CD4-positive, alpha-beta memory T cell (primary cell): ENCODE measurements at regions of chr2 and their contacts with region 1.

Region 1: DNA sequence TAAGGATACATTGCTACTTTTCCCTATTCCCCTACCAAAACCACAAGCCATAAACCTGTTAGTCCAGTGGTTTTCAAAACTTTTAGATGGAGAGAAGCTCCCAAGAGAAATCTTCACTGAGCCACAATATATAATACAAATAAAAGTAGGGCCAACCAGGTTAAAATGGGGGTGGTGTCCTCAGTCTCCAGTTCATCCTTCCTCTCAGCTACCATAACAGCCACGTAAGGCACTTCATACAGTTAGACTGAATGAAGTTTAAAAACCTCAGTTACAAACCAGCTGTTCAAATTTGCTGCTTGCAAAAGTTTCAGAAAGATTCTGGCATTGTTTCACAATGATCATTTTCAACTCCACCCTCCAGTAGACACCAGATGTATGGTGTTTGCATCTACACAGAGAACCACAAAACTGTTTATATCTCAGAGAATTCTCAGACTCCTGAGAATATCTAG is 26.0 kb downstream of the SOS1 start:
- DNase-seq: no peak
- H3K4me3 ChIP-seq: no peak overlapping the region
- H3K4me3 Mint-ChIP-seq: peak overlapping the region in 7 of 8 donors; percentile 2 to 67 (median 9)
- H3K27ac ChIP-seq: no peak overlapping the region
- H3K27ac Mint-ChIP-seq: peak overlapping the region in 6 of 7 donors; percentile 1 to 60 (median 16)
- H3K4me1 ChIP-seq: peaks cover 50% of the 10 kb centered on the region
- H3K4me1 Mint-ChIP-seq: peaks cover 50 to 71% (median 60%) of the 10 kb centered on the region in 4 donors
- H3K27me3 ChIP-seq: no peaks in the 10 kb centered on the region
- H3K27me3 Mint-ChIP-seq: no peaks in the 10 kb centered on the region

Region 2: DNA sequence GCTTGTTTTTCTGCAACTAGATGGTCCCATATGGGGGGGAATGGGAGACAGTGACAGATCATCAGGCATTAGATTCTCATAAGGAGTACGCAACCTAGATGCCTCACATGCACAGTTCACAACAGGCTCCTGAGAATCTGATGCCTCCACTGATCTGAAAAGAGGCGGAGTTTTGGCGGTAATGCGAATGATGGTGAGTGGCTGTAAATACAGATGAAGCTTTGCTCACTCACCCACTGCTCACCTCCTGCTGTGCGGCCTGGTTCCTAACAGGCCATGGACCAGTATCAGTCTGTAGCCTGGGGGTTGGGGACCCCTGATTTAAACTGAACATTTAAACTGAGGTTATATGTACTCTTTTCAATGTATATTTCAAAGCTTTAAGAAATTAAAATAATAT is 14.7 kb before region 1 on chr2:
- CTCF ChIA-PET with region 1: interaction called, 3 read pairs
- POLR2A ChIA-PET with region 1: interaction called, 3 read pairs
- intact Hi-C with region 1: loop called (anchors 2 kb)
- DNase-seq: no peak
- H3K4me3 ChIP-seq: no peak overlapping the region
- H3K4me3 Mint-ChIP-seq: no peak overlapping the region
- H3K27ac ChIP-seq: no peak overlapping the region
- H3K27ac Mint-ChIP-seq: no peak overlapping the region
- H3K4me1 ChIP-seq: peaks cover 25% of the 10 kb centered on the region
- H3K4me1 Mint-ChIP-seq: peaks cover 31 to 53% (median 42%) of the 10 kb centered on the region in 4 donors
- H3K27me3 ChIP-seq: no peaks in the 10 kb centered on the region
- H3K27me3 Mint-ChIP-seq: no peaks in the 10 kb centered on the region